ENCODE measurements at regions of chr2 and their contacts with region 1.

Region 1: GRCh38 chr2:224650815-224651439 is 65.2 kb downstream of the CCDC195 start:
- DNase-seq: peak in 1 of 4 donors; percentile 27
- ATAC-seq: peak; percentile 74
- H3K4me3 ChIP-seq: no peak overlapping the region
- H3K27ac ChIP-seq: no peak overlapping the region
- H3K4me1 ChIP-seq: no peaks in the 10 kb centered on the region
- H3K27me3 ChIP-seq: no peaks in the 10 kb centered on the region
- CTCF ChIP-seq: peak; percentile 47 to 81 (median 75)
- POLR2A ChIP-seq: no peak

Region 2: GRCh38 chr2:224357098-224357901 is 293.6 kb before region 1 on chr2:
- intact Hi-C with region 1: loop called (anchors 5 kb)
- DNase-seq: peak; percentile 58 to 69 (median 62)
- ATAC-seq: peak; percentile 84
- H3K4me3 ChIP-seq: no peak overlapping the region
- H3K27ac ChIP-seq: no peak overlapping the region
- H3K4me1 ChIP-seq: peaks cover 6% of the 10 kb centered on the region
- H3K27me3 ChIP-seq: no peaks in the 10 kb centered on the region
- CTCF ChIP-seq: peak; percentile 42 to 94 (median 86)
- POLR2A ChIP-seq: no peak

Measured in body of pancreas (tissue), 4 donors.